ENCODE measurements at regions of chr7 and their contacts with region 1.

Region 1: GRCh38 chr7:136698231-136698630 is 170.2 kb upstream of the CHRM2 start:
- DNase-seq: no peak
- ATAC-seq: no peak
- H3K4me3 Mint-ChIP-seq: no peak overlapping the region
- H3K27ac Mint-ChIP-seq: no peak overlapping the region
- H3K4me1 Mint-ChIP-seq: no peaks in the 10 kb centered on the region
- H3K27me3 Mint-ChIP-seq: no peaks in the 10 kb centered on the region
- CTCF ChIP-seq: no peak

Region 2: DNA sequence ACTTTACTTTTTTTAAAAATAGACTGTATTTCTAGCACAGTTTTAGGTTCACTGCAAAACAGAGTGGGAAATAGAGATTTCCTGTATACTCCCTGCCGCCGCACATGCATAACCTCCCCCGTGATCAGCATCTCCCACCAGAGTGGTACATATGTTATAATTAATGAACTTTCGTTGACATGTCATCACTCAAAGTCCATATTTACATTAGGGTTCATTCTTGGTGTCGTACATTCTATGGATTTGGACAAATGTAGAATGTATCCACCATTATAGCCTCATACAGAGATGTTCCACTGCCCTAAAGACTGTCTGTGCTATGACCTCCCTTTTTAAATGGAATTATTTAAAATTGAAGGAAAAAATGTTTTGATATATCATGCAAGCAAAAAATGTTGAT is 595.4 kb after region 1 on chr7:
- CTCF ChIA-PET with region 1: no interaction called
- POLR2A ChIA-PET with region 1: no interaction called
- intact Hi-C with region 1: loop called (anchors 5 kb)
- DNase-seq: no peak
- ATAC-seq: no peak
- H3K4me3 Mint-ChIP-seq: no peak overlapping the region
- H3K27ac Mint-ChIP-seq: no peak overlapping the region
- H3K4me1 Mint-ChIP-seq: no peaks in the 10 kb centered on the region
- H3K27me3 Mint-ChIP-seq: no peaks in the 10 kb centered on the region
- CTCF ChIP-seq: no peak

Measured in activated CD8-positive, alpha-beta T cell treated with anti-CD3 and anti-CD28 coated beads for 36 hours (primary cell).